Naive thymus-derived CD4-positive, alpha-beta T cell (primary cell): ENCODE measurements at regions of chr13 and their contacts with region 1.

Region 1: DNA sequence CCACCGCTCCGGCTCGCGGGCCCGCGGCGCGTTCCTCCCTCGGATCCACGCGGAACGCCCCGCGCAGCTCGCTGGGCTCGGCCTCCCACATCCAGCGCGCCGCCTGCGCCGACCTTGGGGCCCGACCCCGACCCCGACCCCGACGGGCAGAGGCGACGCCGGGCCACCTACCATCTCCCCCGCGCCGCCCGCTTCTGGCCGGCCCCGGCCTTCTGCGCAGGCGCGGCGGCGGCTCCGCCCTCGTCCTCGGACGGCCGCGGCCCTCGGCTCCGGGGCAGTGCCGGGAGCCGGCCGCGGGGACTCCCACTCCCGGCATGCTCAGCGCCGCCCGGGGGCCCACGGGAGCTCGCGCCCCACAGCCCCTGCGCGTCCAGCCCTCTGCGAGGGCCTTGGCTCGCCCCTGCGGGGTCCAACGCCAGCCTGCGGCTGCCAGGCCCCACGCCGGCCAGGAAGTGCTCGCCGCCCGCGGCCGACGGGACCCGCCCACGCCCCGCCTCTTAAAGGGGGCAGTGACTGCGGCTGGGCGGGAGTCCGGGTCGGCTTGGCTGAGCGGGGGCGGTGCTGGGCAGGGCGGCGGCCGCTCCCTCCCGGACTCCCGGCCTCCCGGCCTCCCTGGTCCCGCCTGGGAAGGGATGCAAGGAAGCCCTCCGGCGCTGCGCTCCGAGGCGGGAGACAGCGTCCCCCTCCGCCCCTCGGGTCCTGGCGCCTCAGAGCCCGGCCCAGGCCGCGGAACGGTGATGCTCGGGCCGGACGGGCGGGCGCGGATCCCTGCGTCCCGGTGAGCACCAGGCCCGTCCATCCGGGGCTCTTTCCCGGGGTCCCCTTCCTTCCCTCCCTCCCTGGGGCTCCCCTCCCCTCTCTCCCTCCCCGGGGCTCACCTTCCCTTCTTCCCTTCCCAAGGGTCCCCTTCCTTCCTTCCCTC is at the start of gene DCUN1D2:
- DNase-seq: peak; percentile 43 to 90 (median 59)
- ATAC-seq: peak; percentile 91
- H3K4me3 ChIP-seq: peak within 1 kb of the TSS; percentile 53
- H3K4me3 Mint-ChIP-seq: peak within 1 kb of the TSS; percentile 84 to 97 (median 92)
- H3K27ac ChIP-seq: peak within 1 kb of the TSS; percentile 74
- H3K27ac Mint-ChIP-seq: peak within 1 kb of the TSS; percentile 29 to 92 (median 85)
- H3K4me1 ChIP-seq: peaks cover 9 to 24% of the 10 kb centered on the region in 2 donors
- H3K4me1 Mint-ChIP-seq: peaks cover 43 to 78% (median 72%) of the 10 kb centered on the region in 7 donors
- H3K27me3 ChIP-seq: no peaks in the 10 kb centered on the region
- H3K27me3 Mint-ChIP-seq: no peaks in the 10 kb centered on the region
- total RNA-seq, gene DCUN1D2: 21.4 to 31.9 (median 23.4) TPM

Region 2: GRCh38 chr13:112679932-112680705 is 810.6 kb before region 1 on chr13:
- CTCF ChIA-PET with region 1: no interaction called
- POLR2A ChIA-PET with region 1: no interaction called
- intact Hi-C with region 1: no loop called
- DNase-seq: no peak
- ATAC-seq: no peak
- H3K4me3 ChIP-seq: no peak overlapping the region
- H3K4me3 Mint-ChIP-seq: no peak overlapping the region
- H3K27ac ChIP-seq: no peak overlapping the region
- H3K27ac Mint-ChIP-seq: peak overlapping the region in 1 of 9 donors; percentile 42
- H3K4me1 ChIP-seq: no peaks in the 10 kb centered on the region
- H3K4me1 Mint-ChIP-seq: peaks cover 0 to 11% (median 0%) of the 10 kb centered on the region in 7 donors
- H3K27me3 ChIP-seq: no peaks in the 10 kb centered on the region
- H3K27me3 Mint-ChIP-seq: peaks cover 0 to 10% (median 0%) of the 10 kb centered on the region in 5 donors

Region 3: GRCh38 chr13:113584205-113584869 is 93.6 kb after region 1 on chr13 and contains the start of gene TFDP1:
- CTCF ChIA-PET with region 1: no interaction called
- POLR2A ChIA-PET with region 1: no interaction called
- intact Hi-C with region 1: loop called in 1 of 2 experiments (anchors 2 kb)
- DNase-seq: peak; percentile 34 to 91 (median 64)
- ATAC-seq: peak; percentile 84
- H3K4me3 ChIP-seq: peak within 1 kb of the TSS; percentile 56
- H3K4me3 Mint-ChIP-seq: peak within 1 kb of the TSS; percentile 84 to 98 (median 92)
- H3K27ac ChIP-seq: peak within 1 kb of the TSS; percentile 16
- H3K27ac Mint-ChIP-seq: peak within 1 kb of the TSS; percentile 20 to 93 (median 83)
- H3K4me1 ChIP-seq: peaks cover 18 to 21% of the 10 kb centered on the region in 2 donors
- H3K4me1 Mint-ChIP-seq: peaks cover 20 to 39% (median 34%) of the 10 kb centered on the region in 7 donors
- H3K27me3 ChIP-seq: no peaks in the 10 kb centered on the region
- H3K27me3 Mint-ChIP-seq: peaks cover 0 to 3% (median 0%) of the 10 kb centered on the region in 5 donors
- total RNA-seq, gene TFDP1: 21.4 to 127 (median 34.7) TPM

Region 4: DNA sequence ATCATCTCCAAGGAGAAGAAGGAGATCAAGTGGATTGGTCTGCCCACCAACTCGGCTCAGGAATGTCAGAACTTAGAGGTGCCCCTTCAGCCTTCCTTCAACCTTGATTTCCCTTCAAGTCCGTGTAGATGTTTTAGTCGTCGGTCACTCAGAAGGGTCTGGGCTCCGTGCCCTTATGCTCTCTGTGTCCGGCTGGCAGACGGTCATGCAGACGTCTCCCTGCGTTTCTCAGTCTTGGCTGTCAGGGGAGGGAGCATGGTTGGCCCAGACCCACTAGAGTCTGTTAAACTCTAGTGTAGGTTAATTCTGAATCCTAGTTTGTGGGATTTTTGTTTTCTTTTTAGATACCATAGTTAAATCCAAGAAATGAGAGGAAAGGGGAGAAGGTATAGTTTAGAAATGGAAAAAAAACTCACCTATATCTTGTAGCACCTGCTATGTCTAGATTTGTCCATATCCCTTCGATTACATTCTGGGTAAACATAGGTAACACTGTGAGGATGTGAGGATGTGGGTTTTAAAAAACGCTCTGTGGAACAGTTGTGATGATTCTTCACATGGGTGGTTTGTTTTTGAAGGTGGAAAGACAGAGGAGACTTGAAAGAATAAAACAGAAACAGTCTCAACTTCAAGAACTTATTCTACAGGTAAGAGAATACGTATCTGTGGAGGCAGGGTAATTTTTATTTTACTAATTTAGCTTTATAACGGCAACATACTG is 143.4 kb after region 1 on chr13:
- CTCF ChIA-PET with region 1: no interaction called
- POLR2A ChIA-PET with region 1: no interaction called
- intact Hi-C with region 1: loop called in 1 of 2 experiments (anchors 1 kb)
- DNase-seq: peak in 7 of 9 donors; percentile 44 to 89 (median 84)
- ATAC-seq: peak; percentile 89
- H3K4me3 ChIP-seq: peak overlapping the region; percentile 29
- H3K4me3 Mint-ChIP-seq: peak overlapping the region in 9 of 10 donors; percentile 54 to 86 (median 70)
- H3K27ac ChIP-seq: peak overlapping the region; percentile 61
- H3K27ac Mint-ChIP-seq: peak overlapping the region; percentile 5 to 98 (median 90)
- H3K4me1 ChIP-seq: peaks cover 0 to 27% of the 10 kb centered on the region in 2 donors
- H3K4me1 Mint-ChIP-seq: peaks cover 8 to 57% (median 43%) of the 10 kb centered on the region in 7 donors
- H3K27me3 ChIP-seq: no peaks in the 10 kb centered on the region
- H3K27me3 Mint-ChIP-seq: no peaks in the 10 kb centered on the region

Region 5: DNA sequence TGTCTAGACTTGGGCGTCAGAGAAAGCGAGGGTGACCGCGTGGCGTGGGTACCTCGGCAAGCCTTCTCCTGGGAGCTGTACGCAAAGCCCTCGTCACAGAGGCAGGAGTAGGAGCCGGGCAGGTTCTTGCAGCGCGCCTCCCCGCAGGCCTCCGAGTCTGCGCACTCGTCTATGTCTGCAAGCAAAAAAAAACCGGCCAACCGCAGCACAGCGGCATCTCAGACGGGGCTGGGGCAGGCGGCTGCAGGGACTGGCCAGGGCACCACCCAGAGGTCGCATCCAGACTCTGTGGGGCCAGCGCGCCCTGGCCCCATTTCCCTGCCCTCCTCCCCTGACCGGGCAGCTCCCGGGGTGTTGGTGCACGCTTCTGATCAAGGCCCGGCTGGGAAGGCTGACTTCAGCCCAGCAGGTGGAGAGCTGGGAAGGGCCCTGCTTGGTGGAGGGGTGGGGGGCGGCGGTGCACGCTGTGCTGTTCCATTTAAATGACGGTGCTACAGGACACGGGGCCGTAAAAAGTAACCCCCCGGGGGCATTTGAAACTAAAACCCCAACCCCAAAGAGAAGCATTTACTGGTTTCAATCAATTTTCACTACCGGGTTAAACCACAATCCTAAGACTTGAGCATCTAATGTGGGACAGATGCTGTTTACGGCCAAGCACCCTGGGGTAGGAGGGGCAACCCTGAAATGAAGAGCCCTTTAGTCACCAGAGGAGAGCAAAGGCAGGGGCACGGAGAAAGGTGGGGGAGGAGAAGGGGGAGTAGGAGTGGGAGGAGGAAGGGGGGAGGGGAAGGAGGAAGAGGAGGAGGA is 344.9 kb after region 1 on chr13:
- CTCF ChIA-PET with region 1: no interaction called
- POLR2A ChIA-PET with region 1: no interaction called
- intact Hi-C with region 1: no loop called
- DNase-seq: no peak
- ATAC-seq: no peak
- H3K4me3 ChIP-seq: no peak overlapping the region
- H3K4me3 Mint-ChIP-seq: peak overlapping the region in 2 of 10 donors; percentile 30 to 58
- H3K27ac ChIP-seq: no peak overlapping the region
- H3K27ac Mint-ChIP-seq: peak overlapping the region in 1 of 9 donors; percentile 63
- H3K4me1 ChIP-seq: peaks cover 0 to 7% of the 10 kb centered on the region in 2 donors
- H3K4me1 Mint-ChIP-seq: peaks cover 0 to 13% (median 0%) of the 10 kb centered on the region in 7 donors
- H3K27me3 ChIP-seq: no peaks in the 10 kb centered on the region
- H3K27me3 Mint-ChIP-seq: no peaks in the 10 kb centered on the region